ENCODE measurements at regions of chr2 and their contacts with region 1.

Region 1: GRCh38 chr2:74482801-74483674 is at the starts of genes CCDC142 and TTC31:
- DNase-seq: peak; percentile 94
- H3K4me3 Mint-ChIP-seq: peak within 1 kb of the TSS; percentile 85
- H3K27ac Mint-ChIP-seq: peak within 1 kb of the TSS; percentile 68
- H3K4me1 Mint-ChIP-seq: peaks cover 24% of the 10 kb centered on the region
- H3K27me3 Mint-ChIP-seq: no peaks in the 10 kb centered on the region
- CTCF ChIP-seq: peak; percentile 79
- total RNA-seq, gene CCDC142: 29.9 and 30.4 TPM in 2 replicates
- total RNA-seq, gene TTC31: 26.2 and 32.9 TPM in 2 replicates

Region 2: DNA sequence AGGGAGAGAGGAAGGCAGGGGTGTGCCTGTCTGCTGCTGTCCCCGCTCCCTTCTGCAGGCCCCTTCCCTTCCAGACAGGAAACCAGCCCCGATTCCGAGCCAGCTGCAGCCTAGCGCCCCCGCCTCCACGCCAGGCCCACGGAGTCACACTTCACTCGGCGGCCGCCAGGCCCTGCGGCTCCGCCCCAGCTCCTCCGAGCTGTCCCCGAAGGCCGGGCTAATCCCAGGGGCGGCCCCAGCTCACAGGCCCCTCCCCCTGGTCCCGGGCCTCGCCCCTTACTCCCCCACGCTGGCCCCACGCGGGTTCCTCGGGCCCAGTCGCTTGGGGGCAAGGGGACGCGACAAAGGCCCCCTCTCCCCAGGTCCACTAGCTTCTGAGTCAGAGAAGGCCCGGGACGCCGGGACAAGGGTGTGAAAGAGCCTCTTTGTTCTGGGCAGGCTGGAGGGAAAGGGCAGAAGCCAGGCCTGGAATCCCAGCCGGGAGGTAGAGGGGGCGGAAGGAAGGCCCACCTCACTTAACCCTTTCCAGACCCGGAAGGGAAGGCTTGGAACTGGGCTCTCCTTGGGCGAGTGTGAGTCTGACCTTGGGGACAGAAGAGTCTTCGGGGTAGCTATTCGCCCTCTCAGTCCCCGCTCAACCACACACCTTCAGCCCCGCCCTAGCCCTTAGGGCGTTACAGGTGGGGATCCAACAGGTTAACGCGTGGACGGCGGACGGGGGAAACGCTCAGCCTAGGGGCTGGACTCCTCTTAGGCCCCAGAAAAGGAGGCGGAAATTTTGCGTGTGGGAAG is 42.5 kb before region 1 on chr2:
- CTCF ChIA-PET with region 1: interaction called, 5 read pairs
- intact Hi-C with region 1: loop called (anchors 1 kb)
- DNase-seq: peak; percentile 92
- H3K4me3 Mint-ChIP-seq: peak overlapping the region; percentile 97
- H3K27ac Mint-ChIP-seq: peak overlapping the region; percentile 100
- H3K4me1 Mint-ChIP-seq: peaks cover 47% of the 10 kb centered on the region
- H3K27me3 Mint-ChIP-seq: peaks cover 10% of the 10 kb centered on the region
- CTCF ChIP-seq: no peak

Region 3: DNA sequence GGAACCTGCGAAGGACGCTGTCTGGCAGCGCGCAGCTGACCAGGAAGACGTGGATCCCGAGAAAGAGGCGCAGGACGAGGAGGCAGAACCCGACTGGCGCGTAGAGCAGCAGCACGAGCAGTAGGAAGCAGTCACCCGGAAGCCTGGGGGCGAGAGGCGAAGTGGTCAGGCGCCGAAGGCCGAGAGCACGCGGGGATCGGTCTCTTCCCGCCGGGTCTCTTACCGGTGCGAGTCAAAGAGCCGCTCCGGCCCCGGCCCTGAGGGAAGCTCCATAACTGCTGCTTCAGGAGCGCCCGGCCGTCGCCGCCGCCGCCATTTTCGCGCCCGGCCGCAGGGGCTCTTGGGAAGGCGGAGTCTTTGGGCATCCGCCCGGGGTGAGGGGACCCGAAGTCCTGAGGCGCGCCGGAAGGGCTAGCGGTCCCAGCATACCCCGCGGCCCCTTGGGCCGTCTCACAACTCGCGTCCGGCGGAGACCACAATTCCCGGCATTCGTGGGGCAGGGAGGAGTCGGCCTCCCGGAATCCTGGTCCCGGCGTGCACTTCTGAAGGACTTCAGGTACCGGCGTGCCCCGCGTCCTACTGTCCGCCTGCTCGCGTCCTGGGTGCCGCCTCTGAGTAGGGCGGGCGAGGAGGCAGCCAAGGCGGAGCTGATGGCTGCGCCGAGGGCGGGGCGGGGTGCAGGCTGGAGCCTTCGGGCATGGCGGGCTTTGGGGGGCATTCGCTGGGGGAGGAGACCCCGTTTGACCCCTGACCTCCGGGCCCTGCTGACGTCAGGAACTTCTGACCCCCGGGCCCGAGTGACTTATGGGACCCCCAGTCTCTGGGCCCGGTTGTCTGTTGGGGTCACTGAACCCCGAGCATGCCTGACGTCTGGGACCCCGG is 46.6 kb after region 1 on chr2 and contains the starts of genes AUP1 and HTRA2:
- CTCF ChIA-PET with region 1: interaction called, 11 read pairs
- intact Hi-C with region 1: loop called (anchors 1 kb)
- DNase-seq: peak; percentile 98
- H3K4me3 Mint-ChIP-seq: peak within 1 kb of the TSS; percentile 95
- H3K27ac Mint-ChIP-seq: peak within 1 kb of the TSS; percentile 93
- H3K4me1 Mint-ChIP-seq: peaks cover 28% of the 10 kb centered on the region
- H3K27me3 Mint-ChIP-seq: no peaks in the 10 kb centered on the region
- CTCF ChIP-seq: no peak
- total RNA-seq, gene AUP1: 145 and 153 TPM in 2 replicates
- total RNA-seq, gene HTRA2: 23.4 and 26.3 TPM in 2 replicates

Region 4: DNA sequence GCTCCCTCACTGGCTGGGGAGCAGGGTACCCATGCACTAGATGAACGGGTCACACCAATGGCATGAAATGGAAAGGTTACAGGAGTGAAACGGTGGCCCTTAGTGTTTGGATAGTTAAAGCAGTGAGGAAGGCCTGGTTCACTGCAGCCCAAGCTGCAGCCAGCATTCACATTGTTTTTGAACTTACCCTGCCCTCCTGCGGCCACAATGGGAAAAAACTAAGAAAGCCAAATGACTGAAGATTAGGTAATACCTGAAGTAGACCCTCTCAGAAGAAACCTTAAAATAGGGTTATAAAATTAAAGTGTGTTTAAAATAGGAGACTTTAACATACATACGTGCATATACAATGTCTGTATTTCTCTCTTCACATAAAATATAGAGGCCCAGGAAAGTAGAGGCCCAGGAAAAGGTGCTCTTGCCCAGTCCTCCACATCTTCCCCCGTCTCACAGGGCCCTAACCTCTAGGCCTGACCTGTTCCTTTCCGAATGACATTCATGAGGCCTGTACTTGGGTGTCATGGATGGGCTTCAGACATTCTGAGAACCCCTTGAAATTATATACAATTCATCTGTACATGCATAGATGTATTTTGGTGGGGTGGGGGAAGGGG is 104.7 kb after region 1 on chr2:
- CTCF ChIA-PET with region 1: interaction called, 6 read pairs
- intact Hi-C with region 1: loop called (anchors 1 kb)
- DNase-seq: peak; percentile 59
- H3K4me3 Mint-ChIP-seq: no peak overlapping the region
- H3K27ac Mint-ChIP-seq: no peak overlapping the region
- H3K4me1 Mint-ChIP-seq: peaks cover 7% of the 10 kb centered on the region
- H3K27me3 Mint-ChIP-seq: peaks cover 21% of the 10 kb centered on the region
- CTCF ChIP-seq: peak; percentile 27

Measured in Calu3 (cell line).